ENCODE measurements at regions of chr18 and their contacts with region 1.

Region 1: DNA sequence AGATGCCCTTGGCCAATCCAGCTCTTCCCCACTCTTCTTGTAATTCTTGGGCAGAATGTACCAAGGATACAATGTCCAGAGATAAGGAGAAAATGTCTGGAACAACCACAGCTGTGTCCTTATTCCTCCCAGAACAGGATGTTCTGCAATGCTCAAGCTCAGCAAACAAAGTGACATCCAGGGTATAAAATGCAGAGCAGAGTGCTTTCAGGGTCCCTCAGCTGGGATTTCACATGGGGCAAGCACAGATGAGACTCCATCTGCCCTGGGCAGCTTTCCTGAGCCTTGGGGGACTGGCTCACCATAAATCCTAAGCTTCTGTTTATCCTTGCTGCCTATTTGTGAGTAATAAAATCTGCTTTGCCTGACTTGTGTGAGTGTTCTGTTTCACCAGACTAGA is 127.4 kb downstream of the VAPA start:
- DNase-seq: no peak
- ATAC-seq: no peak
- H3K4me3 ChIP-seq: no peak overlapping the region
- H3K27ac ChIP-seq: no peak overlapping the region
- H3K4me1 ChIP-seq: no peaks in the 10 kb centered on the region
- H3K27me3 ChIP-seq: no peaks in the 10 kb centered on the region
- CTCF ChIP-seq: no peak
- POLR2A ChIP-seq: no peak
- RAD21 ChIP-seq: no peak

Region 2: DNA sequence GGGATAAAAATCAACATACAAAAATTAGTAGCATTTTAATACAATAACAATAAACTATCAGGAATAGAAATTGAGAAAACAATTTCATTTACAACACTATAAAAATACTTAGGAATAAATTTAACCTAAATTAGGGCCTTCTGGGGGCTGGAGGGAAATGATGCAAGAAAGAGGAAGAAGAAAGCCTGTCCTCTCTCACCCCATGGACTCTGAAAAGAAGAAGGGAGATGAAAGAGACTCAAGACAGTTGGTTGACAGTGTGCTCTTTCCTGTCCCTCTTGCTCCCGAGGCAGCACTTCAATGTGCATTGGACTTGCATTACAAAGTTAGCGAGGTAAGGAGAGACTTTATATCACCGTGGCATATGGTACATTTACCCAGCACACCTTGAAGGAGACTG is 38.9 kb before region 1 on chr18:
- CTCF ChIA-PET with region 1: no interaction called
- POLR2A ChIA-PET with region 1: no interaction called
- RAD21 ChIA-PET with region 1: no interaction called
- intact Hi-C with region 1: loop called (anchors 5 kb)
- DNase-seq: no peak
- ATAC-seq: no peak
- H3K4me3 ChIP-seq: no peak overlapping the region
- H3K27ac ChIP-seq: no peak overlapping the region
- H3K4me1 ChIP-seq: no peaks in the 10 kb centered on the region
- H3K27me3 ChIP-seq: 0 out of 2 replicates have a peak, but pooled peaks cover 3% of the 10 kb centered on the region
- CTCF ChIP-seq: no peak
- POLR2A ChIP-seq: no peak
- RAD21 ChIP-seq: no peak

Region 3: DNA sequence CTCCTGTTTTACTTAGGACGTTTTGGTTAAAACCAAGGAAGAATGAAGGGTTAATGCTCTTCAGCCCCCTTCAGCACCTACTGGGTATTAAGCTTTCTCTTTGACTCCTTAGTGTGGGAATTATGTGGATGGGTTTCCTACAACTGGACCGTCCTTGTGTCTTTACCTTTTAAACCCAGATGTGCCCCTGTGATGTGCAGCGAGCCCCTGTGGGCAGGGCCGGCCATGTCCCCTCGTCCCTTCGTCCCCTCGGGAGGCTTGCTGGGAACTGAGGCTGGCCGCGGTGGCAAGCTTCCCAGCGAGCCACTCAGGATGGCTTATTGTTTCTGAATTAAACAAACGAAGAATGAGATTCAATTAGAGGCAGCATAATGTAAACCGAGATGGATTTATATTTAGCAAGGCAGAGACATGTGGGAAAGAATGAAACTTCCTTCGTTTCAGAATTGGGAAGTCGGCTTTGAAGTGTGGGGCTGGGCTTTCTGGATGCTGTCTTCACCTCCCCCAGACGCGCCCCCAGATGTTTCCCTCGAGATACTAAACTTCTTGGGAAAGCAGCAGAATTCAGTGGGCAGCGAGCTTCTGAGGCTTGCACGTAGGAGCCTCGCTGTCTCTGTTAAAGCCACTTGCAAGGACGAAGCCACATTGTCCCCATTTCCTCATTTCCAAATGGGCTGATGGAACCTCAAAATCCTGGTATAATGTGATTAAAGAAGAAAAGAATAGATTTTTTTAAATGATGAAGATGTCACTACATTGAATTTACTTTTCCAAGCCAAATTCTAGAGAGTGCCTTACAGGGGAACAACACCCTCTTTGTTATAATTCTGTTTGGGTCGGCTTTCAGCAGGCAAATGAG is 18.7 kb after region 1 on chr18:
- CTCF ChIA-PET with region 1: no interaction called
- POLR2A ChIA-PET with region 1: no interaction called
- RAD21 ChIA-PET with region 1: no interaction called
- intact Hi-C with region 1: loop called (anchors 2 kb)
- DNase-seq: no peak
- ATAC-seq: no peak
- H3K4me3 ChIP-seq: no peak overlapping the region
- H3K27ac ChIP-seq: no peak overlapping the region
- H3K4me1 ChIP-seq: peaks cover 4 to 10% of the 10 kb centered on the region in 2 experiments; a peak in 2 of 4 replicates
- H3K27me3 ChIP-seq: 0 out of 2 replicates have a peak, but pooled peaks cover 8% of the 10 kb centered on the region
- CTCF ChIP-seq: no peak
- POLR2A ChIP-seq: no peak
- RAD21 ChIP-seq: no peak

Region 4: GRCh38 chr18:10833656-10834055 is 792.5 kb after region 1 on chr18:
- CTCF ChIA-PET with region 1: no interaction called
- POLR2A ChIA-PET with region 1: no interaction called
- RAD21 ChIA-PET with region 1: no interaction called
- intact Hi-C with region 1: no loop called
- DNase-seq: no peak
- ATAC-seq: no peak
- H3K4me3 ChIP-seq: no peak overlapping the region
- H3K27ac ChIP-seq: no peak overlapping the region
- H3K4me1 ChIP-seq: no peaks in the 10 kb centered on the region
- H3K27me3 ChIP-seq: peaks cover 32% of the 10 kb centered on the region; the same call in 1 of the 2 replicates
- CTCF ChIP-seq: no peak
- POLR2A ChIP-seq: no peak
- RAD21 ChIP-seq: no peak